ENCODE measurements at regions of chr11 and their contacts with region 1.

Region 1: DNA sequence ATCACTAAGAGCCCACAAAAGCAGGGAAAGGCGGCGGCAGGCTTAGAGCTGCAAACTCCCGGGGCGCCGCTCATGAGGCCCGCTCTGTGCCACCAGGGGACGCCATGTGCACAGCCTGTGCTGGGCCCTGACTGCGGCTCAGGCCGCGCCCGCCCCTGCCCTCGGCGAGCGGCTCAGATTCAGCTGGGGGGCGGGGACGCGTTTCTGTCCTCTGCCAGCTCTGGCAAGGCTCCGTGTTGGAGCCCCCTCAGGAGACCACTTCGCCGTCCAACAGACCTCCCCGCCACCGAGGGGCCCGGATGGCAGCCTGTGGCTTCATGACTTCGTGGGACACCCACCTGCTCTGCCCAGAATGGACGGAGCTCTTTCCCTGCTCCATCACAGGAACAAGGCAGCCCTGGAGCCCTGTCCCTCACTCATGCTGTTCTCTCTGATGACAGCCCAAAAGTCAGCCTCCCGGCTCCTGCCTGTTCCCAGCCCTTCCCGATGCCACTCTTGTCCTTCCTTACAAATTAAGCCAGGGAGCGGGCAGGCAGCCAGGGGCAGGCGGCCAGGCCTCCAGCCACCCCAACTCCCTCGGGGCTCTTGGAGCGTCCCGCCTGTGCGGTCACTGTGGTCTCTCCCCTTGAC is 69.1 kb downstream of the NAT10 start:
- DNase-seq: peak; percentile 92
- ATAC-seq: peak; percentile 95
- H3K4me3 Mint-ChIP-seq: peak overlapping the region; percentile 67
- H3K27ac Mint-ChIP-seq: no peak overlapping the region
- H3K4me1 Mint-ChIP-seq: peaks cover 10% of the 10 kb centered on the region; the same call in 1 of the 2 replicates
- H3K27me3 Mint-ChIP-seq: no peaks in the 10 kb centered on the region
- CTCF ChIP-seq: peak; percentile 67

Region 2: DNA sequence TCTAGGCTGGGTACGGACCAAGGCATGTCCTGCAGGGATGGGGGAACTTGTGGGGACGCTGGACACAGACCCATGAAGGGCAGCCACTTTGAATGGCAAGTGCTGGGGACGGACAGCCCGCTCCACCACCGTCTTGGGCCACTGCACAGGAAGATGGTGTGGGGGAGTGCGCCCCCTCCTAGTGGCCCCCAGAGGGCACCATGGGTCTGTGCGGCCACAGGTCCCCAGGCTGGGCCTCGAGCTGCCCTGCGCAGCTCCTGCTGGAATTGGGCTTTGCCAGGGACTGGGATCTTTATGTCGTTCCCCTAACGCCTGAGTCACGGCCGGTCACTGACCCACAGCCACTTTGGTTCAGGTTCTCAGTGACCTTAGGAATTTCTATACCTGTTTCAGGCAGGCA is 24.7 kb before region 1 on chr11:
- CTCF ChIA-PET with region 1: interaction called, 55 read pairs
- POLR2A ChIA-PET with region 1: no interaction called
- DNase-seq: peak; percentile 44
- ATAC-seq: peak; percentile 89
- H3K4me3 Mint-ChIP-seq: no peak overlapping the region
- H3K27ac Mint-ChIP-seq: no peak overlapping the region
- H3K4me1 Mint-ChIP-seq: no peaks in the 10 kb centered on the region
- H3K27me3 Mint-ChIP-seq: no peaks in the 10 kb centered on the region
- CTCF ChIP-seq: no peak; the same call in 1 of the 2 replicates

Region 3: DNA sequence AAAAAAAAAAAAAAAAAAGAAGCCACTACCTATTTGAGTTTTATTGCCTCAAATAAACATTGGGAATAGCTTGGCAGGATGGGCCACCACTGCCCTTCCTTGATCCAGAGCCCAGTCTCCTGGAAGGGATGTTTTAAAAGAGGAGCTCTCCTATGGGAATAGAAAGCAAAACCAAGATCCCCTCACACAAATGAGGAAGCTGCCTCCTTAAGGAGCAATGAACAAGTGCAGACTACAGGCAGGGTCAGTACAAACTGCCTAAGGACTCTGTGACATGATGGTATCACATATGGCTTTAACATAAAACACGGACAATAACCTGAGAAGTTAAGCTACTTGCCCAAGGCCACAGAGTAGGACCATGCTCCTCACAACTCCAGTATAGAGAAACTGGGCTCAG is 51.7 kb after region 1 on chr11:
- CTCF ChIA-PET with region 1: interaction called, 21 read pairs
- POLR2A ChIA-PET with region 1: no interaction called
- DNase-seq: no peak
- ATAC-seq: no peak
- H3K4me3 Mint-ChIP-seq: no peak overlapping the region
- H3K27ac Mint-ChIP-seq: no peak overlapping the region
- H3K4me1 Mint-ChIP-seq: peaks cover 26% of the 10 kb centered on the region
- H3K27me3 Mint-ChIP-seq: no peaks in the 10 kb centered on the region
- CTCF ChIP-seq: no peak

Region 4: GRCh38 chr11:34263440-34264172 is 89.1 kb after region 1 on chr11:
- CTCF ChIA-PET with region 1: interaction called, 16 read pairs
- POLR2A ChIA-PET with region 1: no interaction called
- DNase-seq: no peak
- ATAC-seq: peak; percentile 65
- H3K4me3 Mint-ChIP-seq: no peak overlapping the region
- H3K27ac Mint-ChIP-seq: peak overlapping the region; percentile 78
- H3K4me1 Mint-ChIP-seq: peaks cover 39% of the 10 kb centered on the region
- H3K27me3 Mint-ChIP-seq: no peaks in the 10 kb centered on the region
- CTCF ChIP-seq: no peak

Region 5: GRCh38 chr11:34344768-34345539 is 170.4 kb after region 1 on chr11:
- CTCF ChIA-PET with region 1: interaction called, 46 read pairs
- POLR2A ChIA-PET with region 1: no interaction called
- DNase-seq: no peak
- ATAC-seq: no peak
- H3K4me3 Mint-ChIP-seq: no peak overlapping the region
- H3K27ac Mint-ChIP-seq: peak overlapping the region; percentile 29; the same call in 1 of the 2 replicates
- H3K4me1 Mint-ChIP-seq: peaks cover 21% of the 10 kb centered on the region
- H3K27me3 Mint-ChIP-seq: no peaks in the 10 kb centered on the region
- CTCF ChIP-seq: no peak

Region 6: DNA sequence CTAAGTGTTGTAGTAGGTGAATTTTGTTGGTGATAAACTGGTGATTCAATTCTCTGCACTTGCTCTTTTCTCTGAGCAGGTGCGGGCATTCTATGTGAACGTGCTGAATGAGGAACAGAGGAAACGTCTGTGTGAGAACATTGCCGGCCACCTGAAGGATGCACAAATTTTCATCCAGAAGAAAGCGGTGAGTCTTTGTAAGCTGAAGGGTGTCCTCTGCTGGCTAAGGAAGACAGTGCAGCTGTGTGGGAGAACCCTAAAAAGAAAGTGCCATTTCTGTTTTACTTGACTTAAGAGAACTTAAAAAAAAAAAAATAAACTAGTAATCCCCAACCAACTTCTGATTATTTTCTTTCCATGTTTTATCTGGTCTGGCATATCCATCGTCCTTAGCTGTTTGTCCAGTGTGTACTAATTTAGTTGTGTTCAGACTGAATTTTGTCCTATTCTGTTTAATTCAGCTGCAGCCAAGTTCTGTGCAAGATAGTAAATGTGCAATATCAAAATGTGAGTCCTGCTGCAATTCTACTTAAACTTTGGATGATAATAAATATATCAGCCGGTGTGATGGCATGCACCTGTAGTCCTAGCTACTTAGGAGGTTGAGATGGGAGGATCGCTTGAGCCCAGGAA is 293.8 kb after region 1 on chr11:
- CTCF ChIA-PET with region 1: interaction called, 11 read pairs
- POLR2A ChIA-PET with region 1: no interaction called
- DNase-seq: peak; percentile 38
- ATAC-seq: peak; percentile 71
- H3K4me3 Mint-ChIP-seq: no peak overlapping the region
- H3K27ac Mint-ChIP-seq: no peak overlapping the region
- H3K4me1 Mint-ChIP-seq: no peaks in the 10 kb centered on the region
- H3K27me3 Mint-ChIP-seq: no peaks in the 10 kb centered on the region
- CTCF ChIP-seq: peak; percentile 47; the same call in 1 of the 2 replicates

Measured in WTC11 (cell line).